ENCODE measurements at regions of chr14 and their contacts with region 1.

Region 1: DNA sequence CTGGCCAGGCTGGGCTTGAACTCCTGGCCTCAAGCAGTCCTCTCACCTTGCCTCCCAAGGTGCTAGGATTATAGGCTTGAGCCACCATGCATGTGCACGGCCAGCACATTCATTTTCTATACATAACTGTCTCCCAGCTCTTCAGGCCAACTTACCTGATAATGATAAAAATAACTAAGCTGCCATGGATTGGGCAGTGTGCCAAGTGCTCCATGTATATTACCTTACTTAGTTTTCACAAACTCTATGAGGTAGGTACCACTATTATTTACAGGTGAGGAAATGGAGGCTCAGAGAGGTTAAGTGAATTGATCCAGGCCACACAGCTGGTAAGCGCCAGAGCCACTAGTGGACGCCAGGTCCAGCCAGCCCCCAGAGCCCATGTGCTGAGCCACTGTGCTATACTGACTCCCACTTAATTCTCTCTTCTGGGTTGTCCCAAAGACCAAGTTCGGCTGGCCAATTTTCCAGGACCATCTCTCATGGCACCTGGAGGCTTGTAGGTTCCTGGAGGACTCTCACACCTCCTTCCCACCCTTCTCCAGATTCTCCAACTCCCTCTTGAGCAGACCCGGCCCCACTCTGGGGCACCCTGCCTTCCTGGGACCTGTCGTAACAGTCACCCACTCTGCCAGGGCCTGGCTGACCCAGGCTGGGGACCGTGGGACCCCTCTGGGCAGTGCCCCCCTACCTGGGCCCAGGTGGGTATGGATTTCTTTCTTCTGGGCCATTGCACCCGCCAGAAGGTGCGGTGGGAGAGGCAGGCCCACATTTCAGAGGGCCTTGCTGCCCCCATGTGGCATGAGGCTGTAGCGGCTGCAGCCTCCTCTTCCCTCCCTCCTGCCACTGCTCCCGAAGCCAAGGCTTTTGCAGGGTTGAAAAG is 30.2 kb upstream of the CIPC start:
- DNase-seq: peak; percentile 62 to 85
- H3K4me3 ChIP-seq: no peak overlapping the region
- H3K27ac ChIP-seq: no peak overlapping the region
- H3K4me1 ChIP-seq: peaks cover 0 to 3% (median 1%) of the 10 kb centered on the region in 4 experiments; a peak in 4 of 7 replicates
- H3K27me3 ChIP-seq: no peaks in the 10 kb centered on the region
- CTCF ChIP-seq: peak; percentile 94 to 98 (median 95)
- EP300 ChIP-seq: no peak
- POLR2A ChIP-seq: no peak
- RAD21 ChIP-seq: peak; percentile 98 to 99

Region 2: DNA sequence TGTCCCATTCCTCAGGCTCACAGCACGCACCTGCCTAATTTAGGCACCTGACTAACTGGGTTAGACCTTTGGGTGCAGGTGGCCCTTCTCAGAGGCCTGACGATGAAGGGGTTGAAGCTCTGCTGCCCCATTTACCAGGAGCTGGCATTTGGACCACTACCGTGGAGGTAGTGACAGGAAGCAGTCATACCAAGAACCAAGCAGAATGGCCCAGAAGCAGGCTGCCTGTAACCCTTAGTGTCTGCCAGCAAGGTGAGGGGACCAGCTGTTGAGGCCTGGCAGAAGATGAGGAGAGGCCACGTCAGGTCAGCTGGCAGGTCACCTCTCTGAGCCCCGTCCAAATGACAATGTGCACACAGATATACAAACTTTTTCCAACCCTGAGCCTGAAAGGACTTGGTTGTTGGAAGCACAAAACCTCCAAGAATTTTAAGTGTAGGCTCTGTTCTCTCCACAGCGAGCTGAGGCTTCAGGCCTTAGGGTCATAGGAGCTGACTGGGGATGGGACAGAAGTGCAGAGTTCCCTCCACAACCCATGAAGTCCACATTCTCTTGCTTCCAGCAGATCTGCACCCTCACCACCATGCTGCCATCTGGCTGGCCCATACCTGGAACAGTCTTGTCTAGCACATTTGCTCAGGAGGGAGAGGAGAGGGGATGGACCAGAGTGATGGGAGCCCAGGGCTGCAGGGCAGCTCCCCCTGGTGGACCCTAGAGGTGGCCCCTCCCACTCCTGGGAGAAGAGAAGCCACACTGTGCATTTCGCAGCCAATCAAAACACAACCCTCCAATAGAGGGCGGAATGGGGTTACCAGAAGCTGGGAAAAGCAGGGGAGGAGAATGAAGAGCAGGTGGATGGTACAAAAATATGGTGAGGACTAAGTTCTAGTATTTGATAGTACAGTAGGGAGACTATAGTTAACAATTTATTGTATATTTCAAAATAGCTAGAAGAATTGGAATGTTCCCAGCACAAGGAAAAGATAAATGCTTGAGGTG is 283.3 kb before region 1 on chr14:
- CTCF ChIA-PET with region 1: interaction called, 15 read pairs
- POLR2A ChIA-PET with region 1: no interaction called
- DNase-seq: peak; percentile 58 to 91
- H3K4me3 ChIP-seq: no peak overlapping the region
- H3K27ac ChIP-seq: no peak overlapping the region
- H3K4me1 ChIP-seq: no peaks in the 10 kb centered on the region
- H3K27me3 ChIP-seq: no peaks in the 10 kb centered on the region
- CTCF ChIP-seq: peak; percentile 94 to 99 (median 98)
- EP300 ChIP-seq: no peak
- POLR2A ChIP-seq: no peak
- RAD21 ChIP-seq: peak; percentile 82 to 85

Region 3: DNA sequence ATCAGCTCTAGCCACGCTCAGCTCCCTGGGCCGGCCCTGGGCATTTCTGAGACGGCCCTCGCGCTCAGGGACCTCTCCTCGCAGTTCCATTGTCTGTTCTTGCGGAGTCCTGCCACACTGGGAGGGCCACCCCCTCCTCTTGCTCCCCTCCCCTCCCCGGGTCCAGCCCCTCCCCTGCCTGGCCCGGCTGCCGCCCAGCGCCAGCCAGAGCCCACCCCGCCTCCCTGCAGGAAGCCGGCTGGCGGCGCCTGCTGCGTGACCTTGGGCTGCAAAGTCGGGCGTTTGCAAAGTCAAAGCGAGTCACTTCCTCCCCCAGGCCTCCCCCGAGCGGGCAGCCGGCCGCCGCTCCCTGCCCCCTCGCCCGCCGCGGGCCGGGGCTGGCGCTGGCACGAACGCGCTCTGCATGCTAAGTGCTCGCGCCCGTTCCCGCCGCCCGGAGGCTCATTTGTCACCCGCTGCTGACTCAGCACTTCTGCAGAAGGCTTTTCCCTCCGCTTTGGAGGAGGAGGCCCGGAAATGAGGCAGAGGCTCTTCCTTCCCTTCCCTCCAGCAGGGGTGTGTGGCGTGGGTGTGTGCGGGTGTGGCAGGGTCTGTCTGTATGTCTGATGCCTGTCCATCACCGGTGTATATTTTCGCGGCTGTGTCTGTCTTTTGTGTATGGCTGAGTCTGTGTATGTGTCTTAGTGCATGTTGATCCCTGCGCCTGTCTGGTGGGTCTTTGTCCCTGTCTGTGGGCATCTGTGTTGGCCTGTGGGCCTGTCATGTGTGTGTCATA is 111.4 kb before region 1 on chr14:
- CTCF ChIA-PET with region 1: interaction called, 10 read pairs
- POLR2A ChIA-PET with region 1: no interaction called
- DNase-seq: peak; percentile 91 to 94
- H3K4me3 ChIP-seq: peak overlapping the region; percentile 11 to 48 (median 26); a peak in 5 of 8 replicates
- H3K27ac ChIP-seq: peak overlapping the region; percentile 83
- H3K4me1 ChIP-seq: peaks cover 35 to 48% (median 41%) of the 10 kb centered on the region in 4 experiments
- H3K27me3 ChIP-seq: no peaks in the 10 kb centered on the region
- CTCF ChIP-seq: no peak; a peak in 1 of 4 replicates
- EP300 ChIP-seq: peak; percentile 36 to 88
- POLR2A ChIP-seq: peak in 1 of 2 experiments; percentile 25; a peak in 2 of 3 replicates
- RAD21 ChIP-seq: peak in 1 of 2 experiments; percentile 24; a peak in 2 of 4 replicates

Region 4: DNA sequence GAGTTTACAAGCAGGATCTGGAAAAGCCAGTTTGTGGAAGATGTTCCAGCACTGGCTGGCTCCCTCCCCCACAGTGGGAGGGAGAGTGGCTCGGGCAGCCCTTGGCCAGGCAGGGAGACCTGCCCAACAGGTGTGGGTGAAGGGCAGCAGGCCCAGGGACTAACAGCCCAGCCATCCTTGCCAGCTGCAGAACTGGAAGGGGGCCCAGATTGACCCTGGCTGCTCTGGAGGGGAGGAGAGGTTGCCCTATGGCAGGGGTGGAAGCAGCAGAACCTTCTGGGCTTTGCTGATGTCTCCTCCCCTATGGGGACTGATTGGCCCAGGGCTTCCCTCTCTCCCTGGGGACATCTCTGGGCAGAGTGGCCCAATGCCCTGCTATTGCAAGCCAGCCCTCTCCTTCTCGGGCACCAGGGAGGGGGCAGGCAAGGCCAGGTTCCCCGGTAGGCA is 59.9 kb before region 1 on chr14:
- CTCF ChIA-PET with region 1: interaction called, 11 read pairs
- POLR2A ChIA-PET with region 1: no interaction called
- DNase-seq: no peak
- H3K4me3 ChIP-seq: no peak overlapping the region
- H3K27ac ChIP-seq: no peak overlapping the region
- H3K4me1 ChIP-seq: peaks cover 8 to 31% (median 15%) of the 10 kb centered on the region in 4 experiments; a peak in 6 of 7 replicates
- H3K27me3 ChIP-seq: no peaks in the 10 kb centered on the region
- CTCF ChIP-seq: no peak
- EP300 ChIP-seq: no peak
- POLR2A ChIP-seq: no peak
- RAD21 ChIP-seq: no peak

Region 5: GRCh38 chr14:77053046-77053841 is 14.6 kb before region 1 on chr14:
- CTCF ChIA-PET with region 1: interaction called, 77 read pairs
- POLR2A ChIA-PET with region 1: no interaction called
- DNase-seq: peak; percentile 70 to 93
- H3K4me3 ChIP-seq: no peak overlapping the region
- H3K27ac ChIP-seq: no peak overlapping the region
- H3K4me1 ChIP-seq: peaks cover 0 to 12% (median 7%) of the 10 kb centered on the region in 4 experiments; a peak in 5 of 7 replicates
- H3K27me3 ChIP-seq: no peaks in the 10 kb centered on the region
- CTCF ChIP-seq: peak; percentile 89 to 98 (median 98)
- EP300 ChIP-seq: peak in 1 of 2 experiments; percentile 70; a peak in 1 of 3 replicates
- POLR2A ChIP-seq: no peak
- RAD21 ChIP-seq: peak; percentile 97 to 99

Region 6: GRCh38 chr14:77124345-77125280 is 56.7 kb after region 1 on chr14:
- CTCF ChIA-PET with region 1: interaction called, 41 read pairs
- POLR2A ChIA-PET with region 1: interaction called, 3 read pairs
- DNase-seq: peak in 1 of 2 experiments; percentile 81
- H3K4me3 ChIP-seq: peak overlapping the region; percentile 62 to 79 (median 68)
- H3K27ac ChIP-seq: no peak overlapping the region
- H3K4me1 ChIP-seq: peaks cover 20 to 36% (median 24%) of the 10 kb centered on the region in 4 experiments
- H3K27me3 ChIP-seq: peaks cover 0 to 2% (median 0%) of the 10 kb centered on the region in 4 experiments; a peak in 1 of 7 replicates
- CTCF ChIP-seq: peak; percentile 66 to 78 (median 68)
- EP300 ChIP-seq: no peak
- POLR2A ChIP-seq: peak in 1 of 2 experiments; percentile 30; a peak in 1 of 3 replicates
- RAD21 ChIP-seq: peak; percentile 33 to 65; a peak in 3 of 4 replicates